ENCODE measurements at regions of chr2 and their contacts with region 1.

Region 1: GRCh38 chr2:127174136-127174535 is 46.0 kb downstream of the CYP27C1 start:
- DNase-seq: peak; percentile 75
- H3K4me3 ChIP-seq: no peak overlapping the region
- H3K27ac ChIP-seq: peak overlapping the region in 3 of 4 donors; percentile 84 to 87 (median 86)
- H3K4me1 ChIP-seq: peaks cover 0 to 46% (median 40%) of the 10 kb centered on the region in 4 donors
- H3K27me3 ChIP-seq: no peaks in the 10 kb centered on the region
- CTCF ChIP-seq: no peak
- EP300 ChIP-seq: no peak
- POLR2A ChIP-seq: no peak

Region 2: DNA sequence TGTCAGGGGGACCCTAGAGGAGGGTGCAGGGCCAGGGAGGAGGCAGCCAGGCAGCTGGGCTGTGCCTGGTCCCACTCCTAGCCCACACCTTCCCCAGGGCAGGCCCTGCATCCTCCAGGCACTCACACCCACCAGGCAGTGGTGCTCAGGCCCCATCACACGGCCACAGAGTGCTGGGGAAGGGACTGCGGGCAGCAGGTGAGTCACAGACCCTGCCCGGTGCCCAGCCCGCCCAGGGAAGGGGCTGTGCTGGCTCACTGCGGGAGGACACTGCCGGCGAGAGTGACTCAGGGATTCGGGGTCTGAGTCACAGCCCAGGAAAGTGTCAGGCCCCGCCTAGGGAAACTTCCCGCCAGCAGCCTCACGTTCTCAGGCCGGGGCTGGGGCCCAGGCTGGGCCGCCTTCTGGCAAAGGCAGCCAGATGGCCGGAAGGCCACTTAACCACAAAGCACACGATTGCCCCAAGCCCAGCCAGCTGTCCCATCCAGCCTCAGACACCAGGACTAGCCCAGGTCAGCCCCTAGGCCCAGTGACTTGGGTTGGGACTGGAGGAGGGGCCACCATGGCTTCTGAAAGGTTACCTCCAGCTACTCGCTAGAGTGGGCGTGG is 109.4 kb before region 1 on chr2:
- intact Hi-C with region 1: loop called (anchors 2 kb)
- DNase-seq: peak; percentile 97
- H3K4me3 ChIP-seq: peak overlapping the region in 1 of 4 donors; percentile 4
- H3K27ac ChIP-seq: peak overlapping the region; percentile 67 to 77 (median 75)
- H3K4me1 ChIP-seq: peaks cover 0 to 29% (median 22%) of the 10 kb centered on the region in 4 donors
- H3K27me3 ChIP-seq: no peaks in the 10 kb centered on the region
- CTCF ChIP-seq: no peak
- EP300 ChIP-seq: peak in 2 of 4 donors; percentile 25 to 87
- POLR2A ChIP-seq: no peak

Region 3: GRCh38 chr2:127106951-127107621 is 67.0 kb before region 1 on chr2 and contains the start of gene BIN1:
- intact Hi-C with region 1: loop called (anchors 2 kb)
- DNase-seq: peak; percentile 92
- H3K4me3 ChIP-seq: peak within 1 kb of the TSS; percentile 73 to 92 (median 82)
- H3K27ac ChIP-seq: peak within 1 kb of the TSS; percentile 87 to 91 (median 89)
- H3K4me1 ChIP-seq: peaks cover 0 to 38% (median 25%) of the 10 kb centered on the region in 4 donors
- H3K27me3 ChIP-seq: no peaks in the 10 kb centered on the region
- CTCF ChIP-seq: no peak
- EP300 ChIP-seq: no peak
- POLR2A ChIP-seq: peak in 1 of 2 donors; percentile 33
- total RNA-seq, gene BIN1: 36.1 to 57.9 (median 43.2) TPM

Region 4: GRCh38 chr2:127219171-127220070 is 45.3 kb after region 1 on chr2:
- intact Hi-C with region 1: loop called (anchors 1 kb)
- DNase-seq: peak; percentile 68
- H3K4me3 ChIP-seq: peak overlapping the region; percentile 47 to 60 (median 53)
- H3K27ac ChIP-seq: peak overlapping the region in 3 of 4 donors; percentile 10 to 32 (median 30)
- H3K4me1 ChIP-seq: peaks cover 0 to 24% (median 19%) of the 10 kb centered on the region in 4 donors
- H3K27me3 ChIP-seq: peaks cover 8 to 55% (median 24%) of the 10 kb centered on the region in 3 donors
- CTCF ChIP-seq: no peak
- EP300 ChIP-seq: no peak
- POLR2A ChIP-seq: no peak

Region 5: DNA sequence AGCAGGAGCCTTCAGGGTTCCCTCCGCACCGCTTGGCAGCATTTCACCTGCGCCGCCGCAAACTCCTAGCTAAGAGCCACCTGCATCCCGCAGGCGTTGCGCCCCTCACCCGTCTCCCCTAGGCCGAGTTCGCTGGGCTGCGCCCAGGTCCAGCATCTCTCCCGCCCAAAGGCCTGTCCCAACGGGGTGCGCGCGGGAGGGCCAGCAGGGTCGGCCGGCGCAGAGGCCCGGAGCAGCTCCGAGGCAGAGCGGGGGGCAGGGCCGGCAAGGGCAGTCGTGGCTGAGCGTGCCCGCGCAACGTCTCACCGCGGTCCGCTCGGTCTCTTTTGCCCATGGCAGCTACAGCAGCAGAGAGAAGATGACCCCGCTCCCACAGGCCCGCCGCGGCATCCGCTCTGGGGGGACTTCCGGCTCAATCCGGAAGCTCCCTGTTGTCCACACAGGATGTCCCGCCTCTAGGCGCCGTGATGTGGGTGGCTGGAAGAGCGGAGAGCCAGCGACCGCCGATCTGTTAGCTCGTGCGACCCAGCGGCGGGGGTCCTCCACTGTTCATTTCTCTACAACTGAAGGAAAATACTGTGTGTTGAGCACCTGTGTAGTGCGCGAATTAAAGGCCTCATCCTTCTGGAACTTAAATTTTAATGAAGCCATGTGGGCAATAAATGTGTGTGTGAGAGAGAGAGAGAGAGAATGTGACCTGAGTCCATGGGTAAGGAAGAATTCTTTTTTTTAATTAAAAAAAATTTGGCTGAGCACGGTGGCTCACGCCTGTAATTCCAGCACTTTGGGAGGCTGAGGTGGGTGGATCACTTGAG is 119.8 kb after region 1 on chr2 and contains the start of gene ERCC3:
- intact Hi-C with region 1: loop called (anchors 2 kb)
- DNase-seq: peak; percentile 90
- H3K4me3 ChIP-seq: peak within 1 kb of the TSS; percentile 72 to 97 (median 90)
- H3K27ac ChIP-seq: peak within 1 kb of the TSS; percentile 74 to 86 (median 82)
- H3K4me1 ChIP-seq: peaks cover 0 to 19% (median 13%) of the 10 kb centered on the region in 4 donors
- H3K27me3 ChIP-seq: no peaks in the 10 kb centered on the region
- CTCF ChIP-seq: no peak
- EP300 ChIP-seq: no peak
- POLR2A ChIP-seq: peak; percentile 22 to 34
- total RNA-seq, gene ERCC3: 31.7 to 44.8 (median 39.1) TPM

Region 6: GRCh38 chr2:127408004-127408806 is 234.1 kb after region 1 on chr2:
- intact Hi-C with region 1: loop called (anchors 1 kb)
- DNase-seq: peak; percentile 96
- H3K4me3 ChIP-seq: peak overlapping the region; percentile 38 to 63 (median 57)
- H3K27ac ChIP-seq: peak overlapping the region; percentile 87 to 93 (median 90)
- H3K4me1 ChIP-seq: peaks cover 0 to 33% (median 25%) of the 10 kb centered on the region in 4 donors
- H3K27me3 ChIP-seq: no peaks in the 10 kb centered on the region
- CTCF ChIP-seq: no peak
- EP300 ChIP-seq: peak in 2 of 4 donors; percentile 21 to 71
- POLR2A ChIP-seq: no peak